Activated naive CD4-positive, alpha-beta T cell treated with anti-CD3 and anti-CD28 coated beads for 36 hours (primary cell): ENCODE measurements at regions of chr17 and their contacts with region 1.

Region 1: GRCh38 chr17:80832888-80833583 is 158.6 kb upstream of the CHMP6 start:
- DNase-seq: peak; percentile 91
- H3K4me3 Mint-ChIP-seq: peak overlapping the region; percentile 77
- H3K27ac Mint-ChIP-seq: peak overlapping the region; percentile 96
- H3K4me1 Mint-ChIP-seq: peaks cover 44% of the 10 kb centered on the region
- H3K27me3 Mint-ChIP-seq: no peaks in the 10 kb centered on the region

Region 2: GRCh38 chr17:80263253-80264204 is 569.5 kb before region 1 on chr17:
- CTCF ChIA-PET with region 1: no interaction called
- intact Hi-C with region 1: loop called (anchors 5 kb)
- DNase-seq: peak; percentile 95
- H3K4me3 Mint-ChIP-seq: peak overlapping the region; percentile 96
- H3K27ac Mint-ChIP-seq: peak overlapping the region; percentile 92
- H3K4me1 Mint-ChIP-seq: peaks cover 60% of the 10 kb centered on the region
- H3K27me3 Mint-ChIP-seq: no peaks in the 10 kb centered on the region

Region 3: GRCh38 chr17:80791758-80792284 is 41.2 kb before region 1 on chr17:
- CTCF ChIA-PET with region 1: interaction called, 4 read pairs
- intact Hi-C with region 1: loop called (anchors 2 kb)
- DNase-seq: peak; percentile 77
- H3K4me3 Mint-ChIP-seq: peak overlapping the region; percentile 58
- H3K27ac Mint-ChIP-seq: peak overlapping the region; percentile 94
- H3K4me1 Mint-ChIP-seq: peaks cover 87% of the 10 kb centered on the region
- H3K27me3 Mint-ChIP-seq: no peaks in the 10 kb centered on the region

Region 4: GRCh38 chr17:80802626-80803450 is 30.2 kb before region 1 on chr17:
- CTCF ChIA-PET with region 1: no interaction called
- intact Hi-C with region 1: no loop called
- DNase-seq: no peak
- H3K4me3 Mint-ChIP-seq: no peak overlapping the region
- H3K27ac Mint-ChIP-seq: peak overlapping the region; percentile 41
- H3K4me1 Mint-ChIP-seq: peaks cover 36% of the 10 kb centered on the region
- H3K27me3 Mint-ChIP-seq: no peaks in the 10 kb centered on the region

Region 5: GRCh38 chr17:80855948-80856862 is 23.2 kb after region 1 on chr17:
- CTCF ChIA-PET with region 1: interaction called, 3 read pairs
- intact Hi-C with region 1: loop called (anchors 1 kb)
- DNase-seq: peak; percentile 96
- H3K4me3 Mint-ChIP-seq: peak overlapping the region; percentile 9
- H3K27ac Mint-ChIP-seq: peak overlapping the region; percentile 94
- H3K4me1 Mint-ChIP-seq: peaks cover 75% of the 10 kb centered on the region
- H3K27me3 Mint-ChIP-seq: no peaks in the 10 kb centered on the region

Region 6: GRCh38 chr17:80876950-80877728 is 44.1 kb after region 1 on chr17:
- CTCF ChIA-PET with region 1: no interaction called
- intact Hi-C with region 1: loop called (anchors 1 kb)
- DNase-seq: peak; percentile 85
- H3K4me3 Mint-ChIP-seq: peak overlapping the region; percentile 64
- H3K27ac Mint-ChIP-seq: peak overlapping the region; percentile 96
- H3K4me1 Mint-ChIP-seq: peaks cover 51% of the 10 kb centered on the region
- H3K27me3 Mint-ChIP-seq: no peaks in the 10 kb centered on the region